CD8-positive, alpha-beta memory T cell (primary cell): ENCODE measurements at regions of chr18 and their contacts with region 1.

Region 1: GRCh38 chr18:12391618-12392165 is 14.7 kb upstream of the AFG3L2 start:
- DNase-seq: peak; percentile 27 to 64 (median 38)
- H3K4me3 ChIP-seq: no peak overlapping the region
- H3K4me3 Mint-ChIP-seq: no peak overlapping the region
- H3K27ac ChIP-seq: no peak overlapping the region
- H3K27ac Mint-ChIP-seq: peak overlapping the region in 1 of 8 donors; percentile 41
- H3K4me1 ChIP-seq: no peaks in the 10 kb centered on the region
- H3K4me1 Mint-ChIP-seq: no peaks in the 10 kb centered on the region
- H3K27me3 ChIP-seq: peaks cover 7% of the 10 kb centered on the region
- H3K27me3 Mint-ChIP-seq: peaks cover 7 to 15% of the 10 kb centered on the region in 2 donors

Region 2: DNA sequence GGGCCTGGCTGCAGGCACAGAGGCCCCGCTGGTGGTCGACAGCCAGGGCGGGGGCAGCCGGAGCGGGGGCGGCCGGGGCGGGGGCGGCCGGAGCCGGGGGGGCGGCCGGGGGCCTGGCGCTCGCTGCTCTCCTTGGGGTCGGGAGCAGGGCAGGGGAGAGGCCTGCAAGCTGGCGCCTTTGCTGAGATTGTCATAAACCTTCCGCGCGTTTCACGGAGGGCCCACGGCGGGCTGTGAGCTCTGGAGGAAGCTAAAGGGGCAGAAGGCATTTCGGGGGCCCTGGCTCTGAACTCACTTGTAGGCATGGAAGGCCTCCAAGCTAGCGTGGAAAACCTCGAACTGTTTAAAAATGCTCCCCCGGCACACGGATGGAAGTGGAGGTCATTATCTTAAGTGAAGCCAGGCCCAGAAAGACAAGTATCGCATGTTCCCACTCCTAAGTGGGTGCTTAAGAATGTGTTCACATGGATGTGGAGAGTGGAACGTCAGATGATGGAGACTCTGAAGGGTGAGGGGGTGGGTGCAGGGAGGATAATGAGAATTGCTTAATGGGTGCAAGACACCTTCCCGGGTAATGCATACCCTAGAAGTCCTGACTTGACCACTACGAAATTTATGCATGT is 16.7 kb after region 1 on chr18:
- CTCF ChIA-PET with region 1: interaction called, 63 read pairs
- POLR2A ChIA-PET with region 1: no interaction called
- DNase-seq: peak in 1 of 5 donors; percentile 15
- H3K4me3 ChIP-seq: no peak overlapping the region
- H3K4me3 Mint-ChIP-seq: peak overlapping the region; percentile 54 to 91 (median 75)
- H3K27ac ChIP-seq: no peak overlapping the region
- H3K27ac Mint-ChIP-seq: peak overlapping the region in 7 of 8 donors; percentile 7 to 73 (median 38)
- H3K4me1 ChIP-seq: peaks cover 14% of the 10 kb centered on the region
- H3K4me1 Mint-ChIP-seq: peaks cover 14 to 31% (median 25%) of the 10 kb centered on the region in 3 donors
- H3K27me3 ChIP-seq: no peaks in the 10 kb centered on the region
- H3K27me3 Mint-ChIP-seq: peaks cover 9 to 11% of the 10 kb centered on the region in 2 donors

Region 3: DNA sequence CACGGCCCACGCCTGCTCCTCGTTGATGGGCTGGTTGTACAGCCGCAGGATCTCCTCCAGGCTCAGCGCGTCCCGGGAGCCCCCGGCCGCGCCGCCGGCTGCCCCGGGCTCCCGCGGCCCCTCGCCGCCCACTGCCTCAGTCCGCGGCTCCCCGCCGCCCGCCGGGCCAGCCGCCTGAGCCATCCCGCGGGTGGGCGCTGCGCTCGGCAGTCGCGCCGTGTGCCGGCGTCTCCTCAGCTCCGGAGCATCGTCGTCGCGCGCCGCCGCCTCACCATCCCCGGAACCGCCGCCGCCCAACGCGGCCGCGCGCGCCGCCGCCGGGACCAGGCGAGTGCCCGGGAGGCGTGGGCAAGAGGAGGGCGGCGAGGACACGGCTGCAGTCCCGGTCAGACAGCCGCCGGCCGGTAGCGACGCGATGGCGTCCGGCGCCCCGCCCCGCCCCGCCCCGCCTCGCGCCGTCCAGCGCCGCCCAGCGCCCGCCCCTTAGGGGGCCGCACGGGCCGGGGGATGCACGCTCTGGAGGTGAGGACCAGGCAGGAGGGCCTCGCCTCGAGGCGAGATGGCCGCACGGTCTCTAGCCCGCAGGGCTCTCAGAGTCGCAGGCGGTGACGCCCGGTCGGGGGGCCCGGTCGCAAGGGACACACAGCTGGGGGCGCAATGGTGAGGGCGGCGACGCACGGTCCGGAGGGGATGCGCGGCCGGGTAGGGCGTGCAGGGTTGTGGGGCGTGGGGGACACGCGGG is 266.2 kb after region 1 on chr18 and contains the start of gene SPIRE1:
- CTCF ChIA-PET with region 1: interaction called, 23 read pairs
- POLR2A ChIA-PET with region 1: interaction called, 3 read pairs
- DNase-seq: peak; percentile 19 to 60 (median 34)
- H3K4me3 ChIP-seq: peak within 1 kb of the TSS; percentile 59
- H3K4me3 Mint-ChIP-seq: peak within 1 kb of the TSS; percentile 85 to 94 (median 89)
- H3K27ac ChIP-seq: peak within 1 kb of the TSS; percentile 30
- H3K27ac Mint-ChIP-seq: peak within 1 kb of the TSS in 7 of 8 donors; percentile 50 to 97 (median 63)
- H3K4me1 ChIP-seq: peaks cover 7% of the 10 kb centered on the region
- H3K4me1 Mint-ChIP-seq: peaks cover 17 to 24% (median 18%) of the 10 kb centered on the region in 3 donors
- H3K27me3 ChIP-seq: no peaks in the 10 kb centered on the region
- H3K27me3 Mint-ChIP-seq: peaks cover 0 to 2% of the 10 kb centered on the region in 2 donors
- total RNA-seq, gene SPIRE1: 8.1 to 9.9 TPM